ENCODE measurements at regions of chr1 and their contacts with region 1.

Region 1: DNA sequence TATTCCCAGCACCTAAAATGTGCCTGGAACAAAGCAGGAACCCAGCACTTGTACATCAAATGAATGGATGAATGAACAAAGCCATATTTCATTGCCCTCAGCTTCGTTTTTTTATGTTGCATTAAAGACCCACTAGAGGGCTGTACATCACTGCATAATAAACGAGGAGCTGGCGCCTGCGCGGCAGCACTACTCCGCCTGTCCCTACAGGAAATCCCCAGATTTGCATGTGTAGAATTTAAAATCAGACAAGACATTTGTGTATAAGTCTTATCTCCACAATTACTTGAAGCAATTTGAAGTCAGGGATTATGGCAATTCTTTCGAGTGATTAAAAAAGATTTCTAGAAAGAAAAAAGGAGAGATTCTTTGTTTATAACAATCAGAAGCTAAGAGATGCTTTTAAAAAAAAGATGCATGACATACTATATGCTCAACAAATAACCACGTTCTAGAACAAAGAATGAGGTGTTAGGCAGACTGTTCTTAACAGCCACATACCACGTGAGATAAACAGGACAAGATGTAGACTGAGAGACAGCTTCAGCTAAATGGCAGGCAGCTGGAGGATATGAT is 5.4 kb upstream of the NEK2 start:
- DNase-seq: peak; percentile 72
- H3K4me3 ChIP-seq: no peak overlapping the region
- H3K27ac ChIP-seq: no peak overlapping the region
- H3K4me1 ChIP-seq: peaks cover 7% of the 10 kb centered on the region
- H3K27me3 ChIP-seq: no peaks in the 10 kb centered on the region
- CTCF ChIP-seq: peak; percentile 73

Region 2: DNA sequence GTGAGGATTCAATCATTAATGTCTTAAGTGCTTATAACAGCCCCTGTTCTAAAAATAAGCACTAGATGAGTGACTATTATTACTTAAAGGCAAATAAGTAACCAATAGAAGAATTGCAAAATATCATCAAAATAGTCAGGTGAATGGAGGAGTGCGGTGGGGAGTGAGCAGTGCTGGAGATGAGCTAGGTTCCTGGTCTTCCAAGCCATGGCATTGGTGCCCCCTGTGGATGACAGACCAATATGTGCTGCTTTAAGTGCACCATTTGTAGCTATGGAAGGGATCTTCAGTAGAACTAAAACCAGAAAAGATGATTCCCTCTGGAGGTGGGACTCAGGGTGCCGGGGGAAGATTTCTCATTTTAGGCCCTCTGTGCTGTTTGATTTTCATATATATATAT is 55.8 kb before region 1 on chr1:
- CTCF ChIA-PET with region 1: no interaction called
- dilution Hi-C with region 1: no loop called
- in situ Hi-C with region 1: no loop called
- intact Hi-C with region 1: no loop called
- DNase-seq: peak; percentile 25
- H3K4me3 ChIP-seq: no peak overlapping the region
- H3K27ac ChIP-seq: no peak overlapping the region
- H3K4me1 ChIP-seq: no peaks in the 10 kb centered on the region
- H3K27me3 ChIP-seq: peaks cover 6% of the 10 kb centered on the region
- CTCF ChIP-seq: peak; percentile 35 to 57

Region 3: GRCh38 chr1:211735208-211736170 is 54.6 kb after region 1 on chr1:
- CTCF ChIA-PET with region 1: no interaction called
- dilution Hi-C with region 1: loop called (anchors 5 kb)
- in situ Hi-C with region 1: no loop called
- intact Hi-C with region 1: no loop called
- DNase-seq: peak; percentile 85
- H3K4me3 ChIP-seq: no peak overlapping the region
- H3K27ac ChIP-seq: no peak overlapping the region
- H3K4me1 ChIP-seq: peaks cover 28% of the 10 kb centered on the region
- H3K27me3 ChIP-seq: no peaks in the 10 kb centered on the region
- CTCF ChIP-seq: no peak

Region 4: GRCh38 chr1:212012034-212012740 is 331.3 kb after region 1 on chr1:
- CTCF ChIA-PET with region 1: interaction called, 5 read pairs
- dilution Hi-C with region 1: no loop called
- in situ Hi-C with region 1: no loop called
- intact Hi-C with region 1: loop called (anchors 2 kb)
- DNase-seq: peak; percentile 61
- H3K4me3 ChIP-seq: no peak overlapping the region
- H3K27ac ChIP-seq: no peak overlapping the region
- H3K4me1 ChIP-seq: no peaks in the 10 kb centered on the region
- H3K27me3 ChIP-seq: no peaks in the 10 kb centered on the region
- CTCF ChIP-seq: peak; percentile 98 to 99

Region 5: DNA sequence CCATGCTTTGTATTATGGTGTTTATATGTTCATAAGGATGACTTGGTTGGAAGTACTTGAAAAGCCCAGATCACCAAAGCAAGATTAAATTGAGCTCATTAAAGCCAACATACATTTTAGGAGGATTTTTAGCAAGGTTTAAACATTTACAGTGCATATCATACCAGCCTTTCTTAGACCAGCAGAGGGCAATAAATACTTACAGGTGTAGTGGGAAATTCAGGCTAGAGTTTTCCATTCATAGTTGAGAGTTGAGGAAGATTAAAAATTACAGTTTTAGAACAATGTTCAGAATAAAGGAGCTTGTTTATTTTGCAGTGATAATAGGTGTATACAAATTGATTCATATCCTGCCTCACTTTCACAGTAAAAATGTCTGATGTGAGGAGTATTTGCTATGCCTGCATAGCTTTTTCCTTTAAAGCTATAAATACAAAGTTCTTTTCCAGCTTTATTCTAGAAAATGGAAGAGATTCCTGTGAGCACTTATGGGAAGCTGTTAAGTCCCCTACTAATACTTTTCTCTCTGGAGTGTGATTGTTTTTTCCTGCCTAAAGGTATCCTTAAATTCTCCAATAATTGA is 390.0 kb after region 1 on chr1:
- CTCF ChIA-PET with region 1: no interaction called
- dilution Hi-C with region 1: no loop called
- in situ Hi-C with region 1: no loop called
- intact Hi-C with region 1: loop called (anchors 2 kb)
- DNase-seq: peak; percentile 25
- H3K4me3 ChIP-seq: no peak overlapping the region
- H3K27ac ChIP-seq: no peak overlapping the region
- H3K4me1 ChIP-seq: no peaks in the 10 kb centered on the region
- H3K27me3 ChIP-seq: no peaks in the 10 kb centered on the region
- CTCF ChIP-seq: peak; percentile 62 to 76

Region 6: DNA sequence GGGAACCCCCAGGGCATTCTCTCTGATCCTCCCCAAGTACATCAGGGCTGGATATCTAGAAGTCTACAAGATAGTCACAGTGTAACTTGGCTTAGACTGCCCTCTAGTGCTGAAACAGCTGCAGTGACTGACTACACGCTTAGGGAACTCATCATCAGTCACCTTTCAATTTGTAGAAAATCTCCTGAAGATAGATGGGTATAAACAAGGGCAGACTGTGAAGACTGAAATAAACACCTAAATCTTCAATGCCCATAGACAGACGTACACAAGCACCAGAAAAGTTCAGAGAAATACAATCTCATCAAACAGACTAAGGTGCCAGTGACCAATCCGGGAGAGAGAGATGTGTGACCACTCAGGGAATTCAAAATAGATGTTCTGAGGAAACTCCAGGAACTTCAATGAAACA is 687.2 kb after region 1 on chr1:
- CTCF ChIA-PET with region 1: no interaction called
- dilution Hi-C with region 1: loop called (anchors 25 kb)
- in situ Hi-C with region 1: loop called in 1 of 2 experiments (anchors 25 kb)
- intact Hi-C with region 1: loop called (anchors 1 kb)
- DNase-seq: peak; percentile 54
- H3K4me3 ChIP-seq: no peak overlapping the region
- H3K27ac ChIP-seq: no peak overlapping the region
- H3K4me1 ChIP-seq: no peaks in the 10 kb centered on the region
- H3K27me3 ChIP-seq: no peaks in the 10 kb centered on the region
- CTCF ChIP-seq: peak; percentile 90 to 96

Region 7: DNA sequence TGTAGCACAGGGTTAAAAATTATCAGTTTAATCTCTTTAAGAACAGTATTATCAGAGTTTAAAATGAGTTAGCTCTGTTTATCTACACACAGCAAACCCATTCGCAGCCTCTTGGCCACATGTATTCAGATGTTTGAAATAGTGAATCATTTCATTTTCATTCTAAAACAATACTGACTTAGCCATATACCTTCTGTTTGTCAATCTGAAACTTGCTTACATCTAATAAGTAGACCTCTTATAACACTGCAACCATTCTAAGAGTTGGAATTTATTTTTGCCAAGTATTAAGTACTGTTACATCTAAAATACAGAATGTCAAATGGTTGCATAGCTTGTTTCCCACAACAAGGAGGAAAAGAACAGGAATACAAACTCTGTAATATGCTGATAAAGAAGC is 1309.4 kb after region 1 on chr1:
- CTCF ChIA-PET with region 1: no interaction called
- dilution Hi-C with region 1: no loop called
- in situ Hi-C with region 1: no loop called
- intact Hi-C with region 1: loop called (anchors 5 kb)
- DNase-seq: no peak
- H3K4me3 ChIP-seq: no peak overlapping the region
- H3K27ac ChIP-seq: no peak overlapping the region
- H3K4me1 ChIP-seq: peaks cover 4% of the 10 kb centered on the region
- H3K27me3 ChIP-seq: no peaks in the 10 kb centered on the region
- CTCF ChIP-seq: no peak